ENCODE measurements at regions of chr6 and their contacts with region 1.

Region 1: DNA sequence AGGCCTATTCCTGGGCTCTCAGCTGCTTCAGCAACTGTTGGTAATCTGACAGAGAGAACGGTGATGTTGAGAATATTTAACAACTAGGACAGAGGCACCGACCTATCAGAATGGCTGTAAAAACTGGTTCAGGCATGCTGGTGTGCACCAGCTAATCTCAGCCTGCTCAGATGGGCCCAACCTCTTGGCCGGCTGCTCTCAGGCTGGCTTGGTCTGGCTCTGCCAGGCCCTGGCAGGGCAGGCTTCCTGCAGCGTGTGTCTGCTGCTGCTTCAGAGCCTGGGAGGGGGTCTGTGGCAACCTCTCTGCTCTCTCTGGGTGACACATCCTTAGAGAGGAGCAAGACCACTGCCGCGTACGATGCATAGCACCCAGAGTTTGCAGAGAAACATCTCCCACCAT is 4.8 kb downstream of the SLC2A12 start:
- DNase-seq: no peak
- H3K4me3 ChIP-seq: no peak overlapping the region
- H3K27ac ChIP-seq: peak overlapping the region; percentile 5 to 14
- H3K4me1 ChIP-seq: peaks cover 4% of the 10 kb centered on the region
- H3K27me3 ChIP-seq: no peaks in the 10 kb centered on the region
- CTCF ChIP-seq: no peak
- POLR2A ChIP-seq: no peak

Region 2: DNA sequence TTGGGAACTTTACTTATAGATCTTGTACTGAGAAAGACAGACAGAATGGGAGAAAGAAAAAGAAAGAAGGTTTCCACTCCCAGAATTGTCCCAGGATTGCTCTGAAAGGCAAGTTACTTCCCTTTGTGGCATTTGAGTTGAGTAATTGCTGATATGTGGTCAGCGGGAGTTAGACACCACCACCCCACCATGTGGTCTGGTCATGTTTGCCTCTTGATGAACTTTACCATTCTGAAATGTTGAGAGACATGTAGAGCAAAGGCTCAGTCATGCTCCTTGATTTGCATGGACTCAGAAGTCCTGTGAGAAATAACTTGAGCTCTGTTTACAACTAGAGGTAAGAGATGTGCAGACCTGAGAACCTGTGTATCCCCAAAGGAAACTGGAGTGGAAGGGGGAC is 141.6 kb before region 1 on chr6:
- intact Hi-C with region 1: no loop called
- DNase-seq: no peak
- H3K4me3 ChIP-seq: no peak overlapping the region
- H3K27ac ChIP-seq: no peak overlapping the region
- H3K4me1 ChIP-seq: no peaks in the 10 kb centered on the region
- H3K27me3 ChIP-seq: no peaks in the 10 kb centered on the region
- CTCF ChIP-seq: no peak
- POLR2A ChIP-seq: no peak

Region 3: DNA sequence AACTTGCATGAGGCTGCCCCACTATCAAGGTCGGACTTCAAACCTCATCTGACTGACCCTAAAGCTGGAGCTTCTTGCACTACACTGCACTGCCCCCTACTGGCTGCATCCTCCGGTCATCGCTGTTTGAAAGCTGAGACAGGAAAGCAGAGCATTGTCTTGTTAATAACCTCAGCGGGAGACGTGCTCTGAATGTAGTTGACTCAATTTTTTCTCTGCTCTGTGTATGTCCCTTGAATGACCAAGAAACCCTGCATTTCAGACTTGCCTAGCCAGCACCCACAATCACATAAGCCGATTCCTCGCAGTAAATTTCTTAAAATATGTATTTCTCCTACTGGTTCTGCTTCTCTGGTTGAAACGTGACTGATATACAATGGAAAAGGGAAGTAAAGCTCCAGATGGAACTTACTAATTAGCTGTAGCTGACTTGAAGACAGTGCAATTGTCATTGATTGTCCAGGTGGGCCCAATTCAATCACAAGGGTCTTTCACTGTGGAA is 131.0 kb before region 1 on chr6:
- intact Hi-C with region 1: no loop called
- DNase-seq: peak; percentile 80
- H3K4me3 ChIP-seq: no peak overlapping the region
- H3K27ac ChIP-seq: no peak overlapping the region
- H3K4me1 ChIP-seq: no peaks in the 10 kb centered on the region
- H3K27me3 ChIP-seq: no peaks in the 10 kb centered on the region
- CTCF ChIP-seq: peak; percentile 26 to 79 (median 72)
- POLR2A ChIP-seq: no peak

Region 4: DNA sequence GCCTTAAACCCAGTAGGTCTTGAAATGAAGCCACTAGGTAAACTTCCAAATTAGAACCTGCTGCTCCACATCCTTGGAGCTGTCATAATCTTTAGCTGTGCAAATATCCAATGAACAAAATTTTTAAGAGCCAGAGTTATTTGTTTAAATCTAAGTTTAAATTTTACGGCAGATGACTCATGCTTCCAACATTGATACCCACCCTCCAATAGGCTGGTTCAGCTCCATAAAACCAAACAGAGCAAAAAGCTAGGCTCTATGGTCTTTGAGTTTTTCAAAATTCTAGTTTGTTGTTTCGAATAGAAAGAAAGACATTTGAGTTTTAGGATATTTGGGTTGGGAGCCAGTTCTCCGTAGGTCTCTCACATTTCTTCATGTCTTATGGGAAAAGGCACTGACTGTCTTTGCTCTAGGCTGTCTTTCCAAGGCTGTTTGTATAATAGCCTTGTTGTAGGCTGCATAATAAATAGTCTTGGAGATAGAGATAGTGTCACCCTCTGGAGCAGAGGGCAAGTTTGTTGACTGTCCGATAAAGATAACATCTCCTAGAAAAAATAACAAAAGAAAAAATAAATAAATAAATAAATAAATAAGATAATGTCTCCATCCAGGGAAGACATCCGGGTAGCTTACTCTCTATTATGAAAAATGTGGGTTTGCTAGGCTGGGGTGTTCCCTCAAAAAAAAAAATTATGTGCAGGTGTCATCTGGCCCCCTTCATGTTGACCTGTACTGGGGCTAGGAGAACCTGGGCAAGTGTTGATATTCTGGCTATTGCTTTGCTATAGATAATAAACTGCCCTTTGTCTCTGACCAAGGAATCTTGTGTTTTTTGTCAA is 31.7 kb before region 1 on chr6:
- intact Hi-C with region 1: loop called (anchors 5 kb)
- DNase-seq: no peak
- H3K4me3 ChIP-seq: no peak overlapping the region
- H3K27ac ChIP-seq: peak overlapping the region; percentile 77 to 78
- H3K4me1 ChIP-seq: peaks cover 8% of the 10 kb centered on the region
- H3K27me3 ChIP-seq: no peaks in the 10 kb centered on the region
- CTCF ChIP-seq: no peak
- POLR2A ChIP-seq: no peak

Region 5: DNA sequence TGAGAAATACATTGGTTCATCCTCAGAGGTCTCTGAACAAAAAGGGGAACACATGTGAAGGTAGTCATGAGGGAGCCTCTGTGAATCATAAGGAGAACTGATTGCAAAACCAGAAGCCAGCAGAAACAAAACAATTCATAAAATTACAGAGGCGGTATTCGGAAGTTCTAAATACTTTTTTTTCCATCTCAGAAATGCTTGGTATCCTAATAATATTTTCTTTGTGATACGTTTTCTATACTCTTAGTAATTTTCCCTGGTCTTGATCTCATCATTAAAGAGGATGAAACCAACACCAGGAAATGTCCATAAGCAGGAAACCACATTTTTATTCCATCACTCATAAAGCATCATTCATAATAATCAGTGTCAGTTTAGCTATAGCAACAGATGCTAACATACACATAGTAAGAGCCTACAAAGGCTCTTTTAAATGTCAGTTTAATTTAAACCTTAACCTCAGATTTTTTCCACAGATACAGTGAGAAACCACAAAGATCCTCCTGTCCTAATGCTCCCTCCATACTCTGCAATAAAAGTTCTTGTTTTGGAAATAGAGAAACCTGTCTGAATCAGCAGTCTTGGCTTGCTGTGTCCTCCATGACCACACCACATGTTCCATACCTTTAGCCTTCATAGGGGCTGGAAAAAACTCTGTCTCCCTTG is 241.0 kb after region 1 on chr6:
- intact Hi-C with region 1: no loop called
- DNase-seq: no peak
- H3K4me3 ChIP-seq: no peak overlapping the region
- H3K27ac ChIP-seq: no peak overlapping the region
- H3K4me1 ChIP-seq: no peaks in the 10 kb centered on the region
- H3K27me3 ChIP-seq: no peaks in the 10 kb centered on the region
- CTCF ChIP-seq: no peak
- POLR2A ChIP-seq: no peak